ENCODE measurements at regions of chr3 and their contacts with region 1.

Region 1: GRCh38 chr3:160434071-160434470 is 15.5 kb downstream of the TRIM59 start:
- DNase-seq: no peak
- ATAC-seq: no peak
- H3K4me3 ChIP-seq: no peak overlapping the region
- H3K27ac ChIP-seq: no peak overlapping the region
- H3K4me1 ChIP-seq: no peaks in the 10 kb centered on the region
- H3K27me3 ChIP-seq: no peaks in the 10 kb centered on the region
- CTCF ChIP-seq: no peak

Region 2: GRCh38 chr3:160725338-160725737 is 291.3 kb after region 1 on chr3:
- intact Hi-C with region 1: no loop called
- DNase-seq: no peak
- ATAC-seq: no peak
- H3K4me3 ChIP-seq: no peak overlapping the region
- H3K27ac ChIP-seq: no peak overlapping the region
- H3K4me1 ChIP-seq: no peaks in the 10 kb centered on the region
- H3K27me3 ChIP-seq: no peaks in the 10 kb centered on the region
- CTCF ChIP-seq: no peak

Region 3: GRCh38 chr3:161239703-161240102 is 805.6 kb after region 1 on chr3:
- intact Hi-C with region 1: loop called in 1 of 10 experiments (anchors 5 kb)
- DNase-seq: no peak
- ATAC-seq: no peak
- H3K4me3 ChIP-seq: no peak overlapping the region
- H3K27ac ChIP-seq: no peak overlapping the region
- H3K4me1 ChIP-seq: peaks cover 0 to 11% (median 0%) of the 10 kb centered on the region in 9 donors
- H3K27me3 ChIP-seq: no peaks in the 10 kb centered on the region
- CTCF ChIP-seq: no peak